BJ (cell line): ENCODE measurements at regions of chr20 and their contacts with region 1.

Region 1: GRCh38 chr20:57654363-57654997 is 34.3 kb upstream of the ZBP1 start:
- DNase-seq: no peak
- H3K4me3 ChIP-seq: no peak overlapping the region
- H3K27me3 ChIP-seq: no peaks in the 10 kb centered on the region
- CTCF ChIP-seq: peak; percentile 89

Region 2: DNA sequence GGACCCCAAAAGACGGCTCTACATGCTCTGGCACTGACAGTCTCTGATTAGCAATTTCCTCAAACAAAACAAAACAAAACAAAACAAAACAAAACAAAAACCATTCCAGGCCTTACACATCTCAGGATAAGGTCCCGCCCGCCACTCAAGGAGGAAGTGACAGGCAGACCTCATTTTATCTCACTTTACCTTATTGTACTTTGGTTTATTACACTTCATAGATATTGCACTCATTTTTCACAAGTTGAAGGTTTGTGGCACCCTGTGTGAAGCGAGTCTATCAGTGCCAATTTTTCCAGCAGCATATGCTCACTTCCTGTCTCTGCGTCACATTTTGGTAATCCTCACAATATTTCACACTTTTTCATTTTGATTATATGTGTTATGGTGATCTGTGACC is 49.4 kb before region 1 on chr20:
- CTCF ChIA-PET with region 1: no interaction called
- POLR2A ChIA-PET with region 1: no interaction called
- DNase-seq: no peak
- H3K4me3 ChIP-seq: no peak overlapping the region
- H3K27me3 ChIP-seq: no peaks in the 10 kb centered on the region
- CTCF ChIP-seq: no peak

Region 3: DNA sequence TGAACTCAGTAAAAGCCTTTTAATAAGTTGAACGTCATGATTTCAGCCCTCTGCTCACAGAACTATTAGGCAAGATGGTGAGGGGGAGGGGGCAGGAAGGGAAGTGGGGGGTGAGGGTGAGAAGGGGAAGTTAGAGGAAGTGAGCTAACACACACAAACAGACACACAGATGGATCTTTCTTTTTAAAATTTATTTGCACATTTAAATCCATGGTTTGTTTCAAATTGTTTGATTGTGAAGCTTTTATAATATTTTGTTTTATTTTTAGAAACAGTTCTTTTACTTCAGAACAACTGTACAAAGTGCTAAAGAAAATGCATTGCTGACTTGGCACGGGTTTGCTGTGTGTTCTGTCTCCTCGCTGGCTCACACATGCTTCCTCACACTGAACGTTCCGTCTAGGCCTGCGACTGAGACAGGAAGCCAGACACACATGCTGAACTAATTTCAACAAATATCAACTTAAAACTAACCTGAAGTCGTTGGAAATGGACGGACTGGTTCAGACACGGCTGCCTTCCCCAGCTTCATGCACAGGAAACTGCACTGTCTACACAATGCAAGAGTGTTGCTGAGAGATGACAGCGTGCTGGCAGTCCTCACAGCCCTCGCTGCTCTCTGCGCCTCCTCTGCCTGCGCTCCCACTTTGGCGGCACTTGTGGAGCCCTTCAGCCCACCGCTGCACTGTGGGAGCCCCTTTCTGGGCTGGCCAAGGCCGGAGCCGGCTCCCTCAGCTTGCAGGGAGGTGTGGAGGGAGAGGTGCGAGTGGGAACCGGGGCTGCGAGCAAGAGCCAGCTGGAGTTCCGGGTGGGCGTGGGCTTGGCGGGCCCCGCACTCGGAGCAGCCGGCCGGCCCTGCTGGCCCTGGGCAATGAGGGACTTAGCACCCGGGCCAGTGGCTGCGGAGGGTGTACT is 26.2 kb before region 1 on chr20:
- CTCF ChIA-PET with region 1: interaction called, 15 read pairs
- POLR2A ChIA-PET with region 1: no interaction called
- DNase-seq: no peak
- H3K4me3 ChIP-seq: no peak overlapping the region
- H3K27me3 ChIP-seq: no peaks in the 10 kb centered on the region; the same call in 1 of the 2 replicates
- CTCF ChIP-seq: no peak

Region 4: GRCh38 chr20:57638173-57638894 is 16.1 kb before region 1 on chr20:
- CTCF ChIA-PET with region 1: interaction called, 10 read pairs
- POLR2A ChIA-PET with region 1: no interaction called
- DNase-seq: no peak
- H3K4me3 ChIP-seq: no peak overlapping the region
- H3K27me3 ChIP-seq: peaks cover 2% of the 10 kb centered on the region
- CTCF ChIP-seq: no peak

Region 5: GRCh38 chr20:58087193-58087858 is 432.8 kb after region 1 on chr20:
- CTCF ChIA-PET with region 1: interaction called, 53 read pairs
- POLR2A ChIA-PET with region 1: no interaction called
- DNase-seq: no peak
- H3K4me3 ChIP-seq: no peak overlapping the region
- H3K27me3 ChIP-seq: peaks cover 4% of the 10 kb centered on the region
- CTCF ChIP-seq: peak; percentile 96

Region 6: DNA sequence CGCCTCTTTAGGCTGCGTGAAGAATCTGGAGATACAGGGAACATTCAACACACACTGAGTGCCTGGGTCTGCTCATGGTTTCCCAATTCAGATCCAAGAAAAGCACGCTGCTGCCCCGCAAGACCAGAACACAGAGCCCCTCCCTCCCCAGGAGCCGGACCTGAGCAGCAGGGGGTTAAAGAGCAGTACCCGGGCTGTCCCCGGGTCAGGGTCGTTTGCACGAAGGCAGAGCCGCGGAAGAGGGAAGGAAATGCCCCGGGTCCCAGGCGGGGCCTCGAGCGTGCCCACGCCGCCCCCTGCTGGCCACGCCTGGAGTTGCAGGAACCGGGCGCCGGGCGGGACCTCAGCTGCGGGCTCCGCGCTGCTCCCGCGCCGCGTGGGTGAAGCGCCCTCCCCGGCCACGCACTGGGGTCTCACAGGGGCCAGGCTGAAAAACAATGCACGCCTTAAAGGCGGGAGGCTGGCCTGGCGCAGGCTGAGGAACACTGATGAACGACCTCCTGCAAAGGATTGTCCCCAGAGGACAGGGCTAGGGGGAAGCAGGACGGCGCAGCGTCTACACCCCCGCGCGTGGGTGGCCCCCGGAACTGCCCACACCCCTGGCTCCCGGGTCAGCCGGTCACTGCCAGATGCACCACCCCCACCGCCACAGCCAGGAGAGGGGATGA is 525.1 kb after region 1 on chr20:
- CTCF ChIA-PET with region 1: interaction called, 47 read pairs
- POLR2A ChIA-PET with region 1: no interaction called
- DNase-seq: no peak
- H3K4me3 ChIP-seq: peak overlapping the region; percentile 21; the same call in 1 of the 2 replicates
- H3K27me3 ChIP-seq: peaks cover 11% of the 10 kb centered on the region
- CTCF ChIP-seq: peak; percentile 82

Region 7: GRCh38 chr20:58188527-58188926 is 534.0 kb after region 1 on chr20:
- CTCF ChIA-PET with region 1: interaction called, 14 read pairs
- POLR2A ChIA-PET with region 1: no interaction called
- DNase-seq: no peak
- H3K4me3 ChIP-seq: no peak overlapping the region
- H3K27me3 ChIP-seq: peaks cover 5% of the 10 kb centered on the region; the same call in 1 of the 2 replicates
- CTCF ChIP-seq: no peak